HCT116 (cell line): ENCODE measurements at regions of chr7 and their contacts with region 1.

Region 1: GRCh38 chr7:114426382-114427223 is 12.0 kb downstream of the FOXP2 start:
- DNase-seq: peak; percentile 7
- ATAC-seq: 0 out of 2 replicates have a peak, but pooled peaks have one; percentile 63
- H3K4me3 ChIP-seq: no peak overlapping the region
- H3K27ac ChIP-seq: no peak overlapping the region
- H3K4me1 ChIP-seq: no peaks in the 10 kb centered on the region
- H3K27me3 ChIP-seq: no peaks in the 10 kb centered on the region
- CTCF ChIP-seq: peak; percentile 27 to 57 (median 42); a peak in 5 of 6 replicates
- POLR2A ChIP-seq: no peak
- RAD21 ChIP-seq: peak; percentile 49

Region 2: DNA sequence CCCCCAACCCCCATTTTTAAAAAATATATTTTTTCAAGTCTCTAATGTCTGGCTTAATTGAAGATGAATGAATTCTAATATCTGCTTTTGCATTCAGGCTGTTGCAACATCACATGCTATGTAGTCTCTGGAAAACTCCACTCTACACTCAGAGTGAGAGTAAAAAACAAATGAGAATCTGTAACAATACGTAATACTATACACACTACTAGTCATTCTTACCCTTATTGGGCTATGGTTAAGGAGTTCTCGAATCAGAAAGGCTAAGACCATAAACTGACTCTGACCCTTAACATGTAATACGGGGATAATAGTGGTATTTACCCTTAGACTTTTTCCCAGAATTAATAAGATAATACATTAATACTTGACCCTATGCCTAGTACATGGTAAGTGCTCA is 1593.5 kb before region 1 on chr7:
- CTCF ChIA-PET with region 1: no interaction called
- POLR2A ChIA-PET with region 1: no interaction called
- RAD21 ChIA-PET with region 1: no interaction called
- intact Hi-C with region 1: no loop called
- DNase-seq: no peak
- ATAC-seq: no peak
- H3K4me3 ChIP-seq: no peak overlapping the region
- H3K27ac ChIP-seq: no peak overlapping the region
- H3K4me1 ChIP-seq: no peaks in the 10 kb centered on the region
- H3K27me3 ChIP-seq: no peaks in the 10 kb centered on the region
- CTCF ChIP-seq: no peak
- POLR2A ChIP-seq: no peak
- RAD21 ChIP-seq: no peak

Region 3: GRCh38 chr7:113289140-113289740 is 1137.4 kb before region 1 on chr7:
- CTCF ChIA-PET with region 1: no interaction called
- POLR2A ChIA-PET with region 1: no interaction called
- RAD21 ChIA-PET with region 1: no interaction called
- intact Hi-C with region 1: no loop called
- DNase-seq: peak; percentile 51
- ATAC-seq: peak; percentile 98
- H3K4me3 ChIP-seq: no peak overlapping the region
- H3K27ac ChIP-seq: no peak overlapping the region
- H3K4me1 ChIP-seq: no peaks in the 10 kb centered on the region; a peak in 1 of 4 replicates
- H3K27me3 ChIP-seq: no peaks in the 10 kb centered on the region
- CTCF ChIP-seq: peak; percentile 53 to 66 (median 54); a peak in 5 of 6 replicates
- POLR2A ChIP-seq: no peak
- RAD21 ChIP-seq: peak; percentile 82

Region 4: GRCh38 chr7:114414156-114415063 is 12.2 kb before region 1 on chr7 and contains the start of gene FOXP2:
- CTCF ChIA-PET with region 1: interaction called, 18 read pairs
- POLR2A ChIA-PET with region 1: interaction called, 3 read pairs
- RAD21 ChIA-PET with region 1: no interaction called
- intact Hi-C with region 1: no loop called
- DNase-seq: no peak
- ATAC-seq: no peak
- H3K4me3 ChIP-seq: no peak within 1 kb of the TSS
- H3K27ac ChIP-seq: no peak within 1 kb of the TSS
- H3K4me1 ChIP-seq: peaks cover 0 to 5% of the 10 kb centered on the region in 2 experiments; a peak in 1 of 4 replicates
- H3K27me3 ChIP-seq: no peaks in the 10 kb centered on the region
- CTCF ChIP-seq: no peak
- POLR2A ChIP-seq: no peak
- RAD21 ChIP-seq: no peak
- total RNA-seq, gene FOXP2: 2.5 TPM

Region 5: DNA sequence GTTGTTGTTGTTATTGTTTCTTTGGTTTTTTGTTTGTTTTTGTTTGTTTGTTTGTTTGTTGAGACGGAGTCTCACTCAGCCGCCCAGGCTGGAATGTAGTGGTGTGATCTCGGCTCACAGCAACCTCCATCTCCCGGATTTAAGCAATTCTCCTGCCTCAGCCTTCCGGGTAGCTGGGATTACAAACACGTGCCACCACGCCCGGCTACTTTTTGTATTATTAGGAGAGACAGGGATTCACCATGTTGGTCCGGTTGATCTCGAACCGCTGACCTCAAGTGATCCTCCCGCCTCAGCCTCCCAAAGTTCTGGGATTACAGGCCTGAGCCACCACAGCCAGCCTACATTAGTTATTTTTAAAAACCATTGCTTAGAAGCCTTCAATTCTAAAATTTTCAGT is 33.0 kb after region 1 on chr7:
- CTCF ChIA-PET with region 1: no interaction called
- POLR2A ChIA-PET with region 1: no interaction called
- RAD21 ChIA-PET with region 1: no interaction called
- intact Hi-C with region 1: no loop called
- DNase-seq: no peak
- ATAC-seq: no peak
- H3K4me3 ChIP-seq: no peak overlapping the region
- H3K27ac ChIP-seq: no peak overlapping the region
- H3K4me1 ChIP-seq: no peaks in the 10 kb centered on the region
- H3K27me3 ChIP-seq: no peaks in the 10 kb centered on the region
- CTCF ChIP-seq: no peak
- POLR2A ChIP-seq: no peak
- RAD21 ChIP-seq: no peak

Region 6: DNA sequence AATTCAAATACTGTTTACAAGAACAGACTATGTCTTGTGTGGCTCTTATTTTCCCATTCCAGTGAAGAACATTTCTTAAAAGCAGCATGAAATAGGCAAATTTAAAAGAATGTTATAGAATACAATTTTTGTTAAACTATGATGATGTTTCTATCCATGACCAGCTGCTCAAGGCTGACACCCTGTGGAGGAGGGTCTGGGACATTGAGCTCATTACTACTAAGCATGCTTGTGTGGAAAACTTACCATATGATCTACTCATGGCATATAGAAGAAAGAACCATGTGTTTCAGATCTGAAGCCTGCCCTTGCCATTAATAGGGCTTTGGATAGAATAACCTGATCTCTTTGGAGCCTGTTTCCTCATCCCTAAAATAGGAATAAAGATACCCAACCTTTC is 113.0 kb after region 1 on chr7:
- CTCF ChIA-PET with region 1: interaction called, 23 read pairs
- POLR2A ChIA-PET with region 1: no interaction called
- RAD21 ChIA-PET with region 1: interaction called, 3 read pairs
- intact Hi-C with region 1: no loop called
- DNase-seq: peak; percentile 3
- ATAC-seq: peak; percentile 77
- H3K4me3 ChIP-seq: no peak overlapping the region
- H3K27ac ChIP-seq: no peak overlapping the region
- H3K4me1 ChIP-seq: no peaks in the 10 kb centered on the region
- H3K27me3 ChIP-seq: no peaks in the 10 kb centered on the region
- CTCF ChIP-seq: peak; percentile 33 to 47 (median 43); a peak in 4 of 6 replicates
- POLR2A ChIP-seq: no peak
- RAD21 ChIP-seq: peak; percentile 48

Region 7: GRCh38 chr7:114574384-114574783 is 147.8 kb after region 1 on chr7:
- CTCF ChIA-PET with region 1: no interaction called
- POLR2A ChIA-PET with region 1: no interaction called
- RAD21 ChIA-PET with region 1: no interaction called
- intact Hi-C with region 1: no loop called
- DNase-seq: no peak
- ATAC-seq: no peak
- H3K4me3 ChIP-seq: no peak overlapping the region
- H3K27ac ChIP-seq: no peak overlapping the region
- H3K4me1 ChIP-seq: no peaks in the 10 kb centered on the region
- H3K27me3 ChIP-seq: no peaks in the 10 kb centered on the region
- CTCF ChIP-seq: no peak
- POLR2A ChIP-seq: no peak
- RAD21 ChIP-seq: no peak

Region 8: DNA sequence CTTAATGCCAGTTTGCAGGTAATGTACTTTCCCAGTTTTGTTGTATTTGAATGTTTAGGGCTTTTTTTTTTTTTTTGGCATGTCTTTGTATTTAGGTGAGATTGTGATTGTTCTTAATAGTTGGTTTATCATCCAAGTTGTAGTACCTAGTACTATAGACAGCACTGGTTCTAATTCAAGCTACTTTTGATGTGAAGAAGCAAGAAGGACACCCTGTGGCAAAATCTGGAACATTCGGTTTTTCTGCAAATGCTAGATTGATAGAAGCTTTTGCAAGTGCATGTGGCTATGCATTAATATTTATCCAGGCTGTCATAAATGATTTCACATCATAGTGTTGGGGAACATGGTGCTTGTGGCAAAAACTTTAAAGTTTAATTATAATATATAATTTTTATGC is 236.9 kb after region 1 on chr7:
- CTCF ChIA-PET with region 1: interaction called, 27 read pairs
- POLR2A ChIA-PET with region 1: no interaction called
- RAD21 ChIA-PET with region 1: interaction called, 4 to 5 read pairs
- intact Hi-C with region 1: loop called (anchors 2 kb)
- DNase-seq: peak; percentile 46
- ATAC-seq: peak; percentile 63; the same call in 1 of the 2 replicates
- H3K4me3 ChIP-seq: no peak overlapping the region
- H3K27ac ChIP-seq: no peak overlapping the region
- H3K4me1 ChIP-seq: no peaks in the 10 kb centered on the region
- H3K27me3 ChIP-seq: no peaks in the 10 kb centered on the region
- CTCF ChIP-seq: peak; percentile 26 to 47 (median 37); a peak in 3 of 6 replicates
- POLR2A ChIP-seq: no peak
- RAD21 ChIP-seq: peak; percentile 62